ENCODE measurements at regions of chr1 and their contacts with region 1.

Region 1: DNA sequence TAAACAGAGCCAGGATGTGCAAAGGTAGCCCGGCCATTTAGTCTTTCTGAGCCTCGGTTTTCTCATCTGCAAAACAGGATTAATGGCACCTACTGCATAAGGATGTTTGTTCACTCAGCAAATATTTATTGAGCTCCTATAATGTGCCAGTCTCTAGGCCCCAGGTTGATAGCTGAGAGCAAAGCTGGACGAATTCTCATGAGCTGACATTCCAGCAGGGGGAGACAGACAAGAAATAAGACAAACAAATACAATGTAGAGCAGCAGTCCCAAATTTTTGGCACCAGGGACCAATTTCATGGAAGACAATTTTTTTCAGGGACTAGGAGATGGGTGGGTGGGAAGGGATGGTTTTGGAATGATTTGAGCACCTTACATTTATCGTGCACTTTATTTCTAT is 74.3 kb upstream of the PAX7 start:
- DNase-seq: no peak
- H3K4me3 Mint-ChIP-seq: no peak overlapping the region
- H3K27ac Mint-ChIP-seq: no peak overlapping the region
- H3K4me1 Mint-ChIP-seq: peaks cover 5% of the 10 kb centered on the region
- H3K27me3 Mint-ChIP-seq: peaks cover 69% of the 10 kb centered on the region

Region 2: GRCh38 chr1:18452375-18452949 is 103.9 kb before region 1 on chr1:
- CTCF ChIA-PET with region 1: no interaction called
- DNase-seq: no peak
- H3K4me3 Mint-ChIP-seq: no peak overlapping the region
- H3K27ac Mint-ChIP-seq: no peak overlapping the region
- H3K4me1 Mint-ChIP-seq: no peaks in the 10 kb centered on the region
- H3K27me3 Mint-ChIP-seq: peaks cover 11% of the 10 kb centered on the region

Region 3: GRCh38 chr1:18464665-18465050 is 91.7 kb before region 1 on chr1:
- CTCF ChIA-PET with region 1: no interaction called
- DNase-seq: no peak
- H3K4me3 Mint-ChIP-seq: no peak overlapping the region
- H3K27ac Mint-ChIP-seq: no peak overlapping the region
- H3K4me1 Mint-ChIP-seq: no peaks in the 10 kb centered on the region
- H3K27me3 Mint-ChIP-seq: peaks cover 9% of the 10 kb centered on the region

Region 4: GRCh38 chr1:18575620-18576019 is 19.3 kb after region 1 on chr1:
- CTCF ChIA-PET with region 1: interaction called, 21 read pairs
- DNase-seq: peak; percentile 66
- H3K4me3 Mint-ChIP-seq: no peak overlapping the region
- H3K27ac Mint-ChIP-seq: no peak overlapping the region
- H3K4me1 Mint-ChIP-seq: no peaks in the 10 kb centered on the region
- H3K27me3 Mint-ChIP-seq: peaks cover 21% of the 10 kb centered on the region

Region 5: GRCh38 chr1:18581420-18581880 is 25.1 kb after region 1 on chr1:
- CTCF ChIA-PET with region 1: interaction called, 21 read pairs
- DNase-seq: peak; percentile 61
- H3K4me3 Mint-ChIP-seq: no peak overlapping the region
- H3K27ac Mint-ChIP-seq: no peak overlapping the region
- H3K4me1 Mint-ChIP-seq: no peaks in the 10 kb centered on the region
- H3K27me3 Mint-ChIP-seq: peaks cover 19% of the 10 kb centered on the region

Measured in activated naive CD4-positive, alpha-beta T cell treated with anti-CD3 and anti-CD28 coated beads, Interleukin-2, amount 10 ng/mL, durations not matched to agents 7 days and 5 days (primary cell).